Activated T-helper 2 cell treated with anti-CD3 and anti-CD28 coated beads, Interferon-gamma antibody, Interleukin-2, Interleukin-4, amounts not matched to agents 10 μg/mL and 5 μg/mL and 100 μg/mL, durations not matched to agents 14 hours and 24 hours and 36 hours (primary cell): ENCODE measurements at regions of chr10 and their contacts with region 1.

Region 1: GRCh38 chr10:4849555-4850242 is 23.7 kb downstream of the AKR1E2 start:
- DNase-seq: peak; percentile 80
- H3K4me3 Mint-ChIP-seq: no peak overlapping the region
- H3K27ac Mint-ChIP-seq: peak overlapping the region; percentile 79
- H3K4me1 Mint-ChIP-seq: peaks cover 13% of the 10 kb centered on the region
- H3K27me3 Mint-ChIP-seq: no peaks in the 10 kb centered on the region

Region 2: GRCh38 chr10:4790922-4791321 is 58.8 kb before region 1 on chr10:
- intact Hi-C with region 1: no loop called
- DNase-seq: no peak
- H3K4me3 Mint-ChIP-seq: no peak overlapping the region
- H3K27ac Mint-ChIP-seq: no peak overlapping the region
- H3K4me1 Mint-ChIP-seq: no peaks in the 10 kb centered on the region
- H3K27me3 Mint-ChIP-seq: peaks cover 17% of the 10 kb centered on the region

Region 3: GRCh38 chr10:4981722-4982471 is 132.2 kb after region 1 on chr10:
- intact Hi-C with region 1: loop called (anchors 2 kb)
- DNase-seq: no peak
- H3K4me3 Mint-ChIP-seq: no peak overlapping the region
- H3K27ac Mint-ChIP-seq: no peak overlapping the region
- H3K4me1 Mint-ChIP-seq: no peaks in the 10 kb centered on the region
- H3K27me3 Mint-ChIP-seq: no peaks in the 10 kb centered on the region

Region 4: DNA sequence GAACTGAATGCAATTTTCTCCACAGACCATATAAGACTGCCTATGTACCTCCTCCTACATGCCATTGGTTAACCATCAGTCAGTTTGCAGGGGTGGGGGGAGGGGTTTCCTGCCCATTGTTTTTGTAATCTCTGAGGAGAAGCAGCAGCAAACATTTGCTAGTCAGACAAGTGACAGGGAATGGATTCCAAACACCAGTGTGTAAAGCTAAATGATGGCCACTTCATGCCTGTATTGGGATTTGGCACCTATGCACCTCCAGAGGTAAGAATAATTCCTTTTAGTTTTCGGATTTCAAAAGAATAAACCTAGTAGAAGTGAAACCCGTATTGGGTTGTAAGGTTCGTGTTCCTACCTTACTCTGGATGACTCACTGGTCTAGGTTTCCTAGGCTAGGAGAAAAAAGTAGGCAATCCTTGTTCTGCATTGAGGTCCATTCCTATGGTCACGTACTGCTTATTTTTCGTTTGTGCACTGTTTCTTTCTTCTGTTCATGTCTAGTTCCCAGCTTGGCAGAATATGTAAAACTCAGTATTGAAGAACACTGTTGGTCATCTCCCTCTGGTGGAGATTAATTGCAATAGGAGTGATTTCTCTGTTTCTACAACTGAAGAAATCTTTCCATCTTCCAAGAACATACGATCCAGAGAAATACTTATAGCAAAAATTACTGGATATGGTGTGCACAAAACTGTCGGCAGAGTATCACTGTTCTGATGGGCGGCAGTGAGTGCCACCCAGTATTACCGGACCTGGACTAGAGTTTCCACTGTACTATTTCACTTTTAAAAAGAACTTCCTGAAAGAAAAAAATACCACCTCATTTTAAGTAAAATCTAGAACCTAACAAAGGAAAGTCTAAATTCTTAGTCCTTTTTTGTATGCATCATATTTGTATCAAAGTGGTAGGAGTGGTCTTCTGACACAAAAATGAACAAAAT is 244.8 kb after region 1 on chr10 and contains the start of gene AKR1C3:
- intact Hi-C with region 1: loop called (anchors 2 kb)
- DNase-seq: no peak
- H3K4me3 Mint-ChIP-seq: peak within 1 kb of the TSS; percentile 50
- H3K27ac Mint-ChIP-seq: no peak within 1 kb of the TSS
- H3K4me1 Mint-ChIP-seq: peaks cover 7% of the 10 kb centered on the region
- H3K27me3 Mint-ChIP-seq: peaks cover 3% of the 10 kb centered on the region
- total RNA-seq, gene AKR1C3: 0.34 and 0.53 TPM in 2 replicates

Region 5: DNA sequence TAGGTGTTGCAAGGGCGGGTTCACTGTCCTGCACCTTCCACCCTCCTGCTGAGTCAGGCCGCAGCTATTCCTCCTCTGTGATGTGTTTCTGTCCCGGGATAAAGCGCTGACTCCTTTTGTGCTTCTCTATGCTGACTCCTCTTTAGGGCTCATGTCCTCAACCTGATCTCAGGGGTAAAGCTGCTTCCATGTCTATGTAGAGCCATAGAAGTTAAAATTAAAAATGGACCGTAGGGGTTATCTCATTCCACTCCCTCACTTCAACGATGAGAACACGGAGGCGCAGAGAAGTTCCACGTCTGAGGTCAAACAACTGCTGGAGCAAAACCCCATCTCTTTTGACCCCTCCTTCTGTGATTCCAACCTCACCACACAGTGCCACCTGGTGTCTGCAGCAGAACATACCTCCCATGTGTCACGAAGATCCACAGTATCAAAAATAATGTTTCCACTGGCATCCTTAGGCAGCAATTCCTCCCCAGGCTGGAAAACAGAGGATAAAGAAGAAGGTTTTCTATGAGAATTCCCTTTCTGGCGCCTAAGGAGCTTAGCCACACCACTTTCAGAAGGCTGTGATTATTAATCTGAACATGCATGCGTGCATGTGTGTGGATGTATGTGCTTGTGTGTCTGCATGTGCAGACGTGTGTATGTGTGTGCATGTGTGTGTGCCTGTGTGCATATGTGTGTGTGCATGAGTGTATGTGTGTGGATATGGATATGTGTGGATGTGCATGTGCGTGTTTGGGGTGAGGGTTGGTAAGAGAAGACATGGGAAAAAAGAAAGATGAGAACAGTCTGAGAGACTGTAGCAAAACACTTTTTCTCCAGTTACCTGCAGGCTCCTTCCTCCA is 433.8 kb after region 1 on chr10:
- intact Hi-C with region 1: loop called (anchors 1 kb)
- DNase-seq: peak; percentile 50
- H3K4me3 Mint-ChIP-seq: no peak overlapping the region
- H3K27ac Mint-ChIP-seq: no peak overlapping the region
- H3K4me1 Mint-ChIP-seq: peaks cover 30% of the 10 kb centered on the region
- H3K27me3 Mint-ChIP-seq: no peaks in the 10 kb centered on the region

Region 6: GRCh38 chr10:5385224-5385623 is 535.5 kb after region 1 on chr10:
- intact Hi-C with region 1: loop called (anchors 1 kb)
- DNase-seq: no peak
- H3K4me3 Mint-ChIP-seq: no peak overlapping the region
- H3K27ac Mint-ChIP-seq: no peak overlapping the region
- H3K4me1 Mint-ChIP-seq: no peaks in the 10 kb centered on the region
- H3K27me3 Mint-ChIP-seq: peaks cover 3% of the 10 kb centered on the region

Region 7: GRCh38 chr10:5434017-5434753 is 584.5 kb after region 1 on chr10:
- intact Hi-C with region 1: loop called (anchors 1 kb)
- DNase-seq: no peak
- H3K4me3 Mint-ChIP-seq: no peak overlapping the region
- H3K27ac Mint-ChIP-seq: no peak overlapping the region
- H3K4me1 Mint-ChIP-seq: peaks cover 18% of the 10 kb centered on the region
- H3K27me3 Mint-ChIP-seq: no peaks in the 10 kb centered on the region

Region 8: GRCh38 chr10:5623081-5623748 is 773.5 kb after region 1 on chr10:
- intact Hi-C with region 1: loop called (anchors 10 kb)
- DNase-seq: peak; percentile 73
- H3K4me3 Mint-ChIP-seq: no peak overlapping the region
- H3K27ac Mint-ChIP-seq: no peak overlapping the region
- H3K4me1 Mint-ChIP-seq: peaks cover 8% of the 10 kb centered on the region
- H3K27me3 Mint-ChIP-seq: peaks cover 2% of the 10 kb centered on the region